HepG2 (cell line): ENCODE measurements at regions of chr2 and their contacts with region 1.

Region 1: GRCh38 chr2:37389989-37390765 is 45.7 kb downstream of the QPCT start:
- DNase-seq: peak; percentile 56
- ATAC-seq: peak; percentile 80
- H3K4me3 ChIP-seq: no peak overlapping the region
- H3K27ac ChIP-seq: no peak overlapping the region
- H3K4me1 ChIP-seq: peaks cover 12% of the 10 kb centered on the region; the same call in 1 of the 2 replicates
- H3K27me3 ChIP-seq: peaks cover 0 to 2% of the 10 kb centered on the region in 2 experiments; a peak in 2 of 5 replicates
- CTCF ChIP-seq: no peak
- EP300 ChIP-seq: peak in 1 of 2 experiments; percentile 14; a peak in 1 of 4 replicates
- POLR2A ChIP-seq: no peak
- RAD21 ChIP-seq: no peak

Region 2: DNA sequence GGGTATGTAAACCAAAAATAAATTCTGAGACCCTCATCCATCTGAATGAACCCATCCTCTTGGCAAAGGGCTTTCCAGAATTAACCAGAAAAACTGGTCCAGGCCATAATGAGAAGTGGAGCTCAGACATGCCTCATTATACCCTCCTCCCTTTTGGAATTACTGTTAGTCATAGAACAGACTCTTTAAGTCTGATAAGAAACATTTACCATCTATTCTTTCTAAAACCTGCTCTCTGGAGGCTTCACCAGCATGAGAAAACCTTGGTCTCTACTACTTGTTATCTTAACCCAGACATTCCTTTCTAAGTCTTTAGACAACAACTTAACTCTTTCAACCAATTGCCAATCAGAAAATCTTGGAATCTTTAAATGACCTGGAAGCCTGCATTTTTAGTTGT is 37.1 kb after region 1 on chr2:
- CTCF ChIA-PET with region 1: no interaction called
- POLR2A ChIA-PET with region 1: no interaction called
- in situ Hi-C with region 1: no loop called
- intact Hi-C with region 1: no loop called
- DNase-seq: no peak
- ATAC-seq: no peak
- H3K4me3 ChIP-seq: no peak overlapping the region
- H3K27ac ChIP-seq: no peak overlapping the region
- H3K4me1 ChIP-seq: no peaks in the 10 kb centered on the region
- H3K27me3 ChIP-seq: peaks cover 1 to 2% of the 10 kb centered on the region in 2 experiments; a peak in 1 of 5 replicates
- CTCF ChIP-seq: no peak
- EP300 ChIP-seq: no peak
- POLR2A ChIP-seq: no peak
- RAD21 ChIP-seq: no peak

Region 3: DNA sequence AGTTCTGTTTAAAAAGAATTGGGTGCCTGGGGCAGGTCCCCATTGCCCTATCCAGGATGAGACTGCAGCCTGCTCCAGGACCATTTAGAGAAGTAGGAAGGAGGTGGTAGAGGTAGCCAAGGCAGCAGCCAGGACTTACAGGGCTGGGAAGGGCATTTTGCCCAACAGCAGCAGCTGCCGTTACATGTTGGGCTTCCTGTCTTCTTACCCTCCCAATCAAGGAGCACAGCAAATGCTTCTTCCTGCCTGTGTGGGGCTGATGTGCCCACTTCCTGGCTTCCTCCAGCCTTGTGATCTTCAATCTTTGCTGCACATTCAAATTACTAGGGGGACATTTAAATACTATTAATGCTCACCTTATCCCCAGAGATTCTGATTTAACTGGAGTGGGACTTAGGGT is 66.3 kb after region 1 on chr2:
- CTCF ChIA-PET with region 1: no interaction called
- POLR2A ChIA-PET with region 1: no interaction called
- in situ Hi-C with region 1: no loop called
- intact Hi-C with region 1: no loop called
- DNase-seq: no peak
- ATAC-seq: no peak
- H3K4me3 ChIP-seq: no peak overlapping the region
- H3K27ac ChIP-seq: no peak overlapping the region
- H3K4me1 ChIP-seq: no peaks in the 10 kb centered on the region
- H3K27me3 ChIP-seq: 0 out of 5 replicates have a peak, but pooled peaks cover 0 to 3% of the 10 kb centered on the region in 2 experiments
- CTCF ChIP-seq: no peak
- EP300 ChIP-seq: no peak
- POLR2A ChIP-seq: no peak
- RAD21 ChIP-seq: no peak

Region 4: GRCh38 chr2:37529830-37530415 is 139.7 kb after region 1 on chr2:
- CTCF ChIA-PET with region 1: no interaction called
- POLR2A ChIA-PET with region 1: no interaction called
- in situ Hi-C with region 1: no loop called
- intact Hi-C with region 1: loop called (anchors 10 kb)
- DNase-seq: no peak
- ATAC-seq: no peak
- H3K4me3 ChIP-seq: no peak overlapping the region
- H3K27ac ChIP-seq: no peak overlapping the region
- H3K4me1 ChIP-seq: no peaks in the 10 kb centered on the region
- H3K27me3 ChIP-seq: no peaks in the 10 kb centered on the region
- CTCF ChIP-seq: no peak
- EP300 ChIP-seq: no peak
- POLR2A ChIP-seq: no peak
- RAD21 ChIP-seq: no peak

Region 5: DNA sequence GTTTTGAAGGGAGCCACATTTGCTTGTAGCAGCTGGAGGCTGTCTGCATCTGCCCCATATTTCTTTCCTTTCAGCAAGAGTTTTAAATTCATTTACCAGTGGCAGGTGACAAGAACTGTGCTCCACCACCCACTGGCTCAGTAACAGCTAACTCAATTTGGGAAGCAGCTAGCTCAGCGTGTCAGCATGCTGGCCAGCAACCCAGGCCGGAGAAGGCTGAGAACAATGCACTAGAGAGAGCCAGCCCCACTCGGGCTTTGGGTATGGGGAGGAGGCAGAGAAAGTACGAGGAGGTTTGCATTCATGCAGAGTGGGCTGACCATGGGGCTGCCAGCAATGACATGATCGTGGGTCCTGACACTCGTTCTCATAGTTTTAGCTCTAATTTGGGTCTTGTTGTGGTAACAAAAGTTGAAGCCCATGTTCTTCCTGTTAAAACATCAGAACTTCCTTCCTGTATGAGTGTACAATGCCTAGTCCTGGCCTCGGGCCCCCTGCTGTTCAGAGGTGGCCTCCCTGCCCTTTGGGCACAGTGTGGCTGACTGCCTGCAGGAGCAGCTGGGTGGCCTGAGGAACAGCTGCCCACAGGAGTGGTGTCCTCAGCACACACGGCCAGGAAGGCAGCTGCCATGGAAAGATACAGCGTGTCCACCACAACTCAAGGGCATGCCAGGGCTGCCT is 258.3 kb after region 1 on chr2:
- CTCF ChIA-PET with region 1: no interaction called
- POLR2A ChIA-PET with region 1: no interaction called
- in situ Hi-C with region 1: no loop called
- intact Hi-C with region 1: loop called (anchors 10 kb)
- DNase-seq: no peak
- ATAC-seq: peak; percentile 71
- H3K4me3 ChIP-seq: no peak overlapping the region
- H3K27ac ChIP-seq: no peak overlapping the region
- H3K4me1 ChIP-seq: no peaks in the 10 kb centered on the region
- H3K27me3 ChIP-seq: peaks cover 2 to 29% of the 10 kb centered on the region in 2 experiments; a peak in 3 of 5 replicates
- CTCF ChIP-seq: 0 out of 2 replicates have a peak, but pooled peaks have one; percentile 8
- EP300 ChIP-seq: no peak
- POLR2A ChIP-seq: no peak
- RAD21 ChIP-seq: no peak